ENCODE measurements at regions of chr20 and their contacts with region 1.

Region 1: DNA sequence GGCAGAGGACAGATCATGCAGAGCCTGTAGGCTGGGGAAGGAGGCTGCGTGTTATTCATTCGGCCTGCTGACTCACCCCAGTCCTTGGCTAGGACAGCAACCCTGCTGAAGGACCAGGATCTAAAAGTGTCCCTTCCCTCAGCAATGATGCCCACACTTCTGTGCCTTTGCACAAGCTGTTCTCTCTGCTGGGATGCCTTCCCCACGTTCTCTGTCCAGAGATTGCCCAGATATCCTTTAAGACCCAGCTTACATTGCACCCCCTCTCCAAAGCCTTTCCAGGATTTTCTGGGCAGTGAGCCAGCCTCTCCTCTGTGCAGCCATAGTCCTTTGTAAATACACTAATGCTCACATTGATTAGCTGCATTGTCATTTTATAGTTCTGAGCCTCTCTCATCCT is 99.3 kb upstream of the CHD6 start:
- DNase-seq: no peak
- H3K4me3 ChIP-seq: no peak overlapping the region
- CTCF ChIP-seq: no peak

Region 2: GRCh38 chr20:41693136-41693979 is 24.1 kb before region 1 on chr20:
- CTCF ChIA-PET with region 1: interaction called, 20 read pairs
- POLR2A ChIA-PET with region 1: interaction called, 3 read pairs
- DNase-seq: peak; percentile 29
- H3K4me3 ChIP-seq: peak overlapping the region; percentile 80
- CTCF ChIP-seq: peak; percentile 36

Region 3: GRCh38 chr20:41701588-41702348 is 15.7 kb before region 1 on chr20:
- CTCF ChIA-PET with region 1: interaction called, 20 read pairs
- POLR2A ChIA-PET with region 1: interaction called, 4 read pairs
- DNase-seq: no peak
- H3K4me3 ChIP-seq: no peak overlapping the region
- CTCF ChIP-seq: no peak

Region 4: GRCh38 chr20:41783423-41784208 is 66.1 kb after region 1 on chr20:
- CTCF ChIA-PET with region 1: no interaction called
- POLR2A ChIA-PET with region 1: no interaction called
- DNase-seq: no peak
- H3K4me3 ChIP-seq: no peak overlapping the region
- CTCF ChIP-seq: no peak

Measured in AG04449 (cell line).